ENCODE measurements at regions of chr19 and their contacts with region 1.

Region 1: GRCh38 chr19:4877753-4878490 is 10.5 kb upstream of the PLIN3 start:
- DNase-seq: no peak
- H3K4me3 ChIP-seq: no peak overlapping the region
- H3K27ac ChIP-seq: peak overlapping the region in 1 of 4 donors; percentile 18
- H3K4me1 ChIP-seq: peaks cover 0 to 15% (median 0%) of the 10 kb centered on the region in 3 donors
- H3K27me3 ChIP-seq: peaks cover 0 to 13% (median 0%) of the 10 kb centered on the region in 4 donors
- CTCF ChIP-seq: no peak
- POLR2A ChIP-seq: no peak

Region 2: DNA sequence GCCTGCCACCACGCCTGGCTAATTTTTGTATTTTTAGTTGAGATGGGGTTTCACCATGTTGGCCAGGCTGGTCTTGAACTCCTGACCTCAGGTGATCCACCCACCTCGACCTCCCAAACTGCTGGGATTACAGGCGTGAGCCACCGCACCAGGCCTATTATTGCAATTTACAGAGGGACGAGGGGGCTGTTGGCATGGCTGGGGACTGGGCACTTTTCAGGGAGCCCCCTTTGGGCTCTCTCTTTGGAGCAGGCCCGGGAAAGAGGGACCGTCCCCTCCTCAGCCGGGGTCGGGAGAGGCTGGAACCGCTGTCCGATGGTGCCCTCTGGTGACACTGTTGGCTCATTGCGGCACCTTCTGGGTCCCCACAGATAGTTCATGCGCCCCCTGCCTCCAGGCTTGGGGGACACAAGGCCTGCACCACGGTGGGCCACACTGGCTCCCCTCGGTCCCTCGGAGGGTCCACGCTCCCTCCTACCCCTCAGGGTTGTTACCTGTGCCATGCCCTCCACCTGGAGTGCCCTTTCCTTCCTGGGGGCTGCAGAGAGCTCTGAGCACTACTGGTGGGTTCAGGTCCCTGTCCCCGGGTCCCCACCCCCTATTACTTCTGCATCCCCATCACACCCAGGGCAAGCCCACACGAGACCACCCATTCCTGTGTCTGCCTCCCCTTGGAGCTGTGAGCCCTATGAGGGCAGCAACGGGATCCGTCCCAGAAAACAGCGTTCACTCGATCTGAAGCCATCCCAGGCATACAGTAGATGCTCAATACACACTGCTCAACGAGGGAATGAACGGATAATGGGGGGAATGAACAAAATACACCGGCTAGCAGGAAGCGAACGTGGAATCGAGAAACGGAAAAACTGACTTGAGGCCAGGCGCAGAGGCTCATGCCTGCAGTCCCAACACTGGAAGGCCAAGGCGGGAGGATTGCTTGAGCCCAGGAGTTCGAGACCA is 73.9 kb before region 1 on chr19:
- intact Hi-C with region 1: no loop called
- DNase-seq: no peak
- H3K4me3 ChIP-seq: no peak overlapping the region
- H3K27ac ChIP-seq: no peak overlapping the region
- H3K4me1 ChIP-seq: peaks cover 11 to 43% (median 13%) of the 10 kb centered on the region in 3 donors
- H3K27me3 ChIP-seq: no peaks in the 10 kb centered on the region
- CTCF ChIP-seq: peak; percentile 59 to 82 (median 72)
- POLR2A ChIP-seq: no peak

Region 3: GRCh38 chr19:4909897-4910593 is 32.1 kb after region 1 on chr19:
- intact Hi-C with region 1: loop called (anchors 5 kb)
- DNase-seq: peak; percentile 66
- H3K4me3 ChIP-seq: peak overlapping the region; percentile 61 to 87 (median 70)
- H3K27ac ChIP-seq: peak overlapping the region; percentile 62 to 81 (median 76)
- H3K4me1 ChIP-seq: peaks cover 30 to 60% (median 32%) of the 10 kb centered on the region in 3 donors
- H3K27me3 ChIP-seq: peaks cover 0 to 13% (median 3%) of the 10 kb centered on the region in 4 donors
- CTCF ChIP-seq: no peak
- POLR2A ChIP-seq: no peak

Measured in esophagus squamous epithelium (tissue), 5 donors.